ENCODE measurements at regions of chr12 and their contacts with region 1.

Region 1: DNA sequence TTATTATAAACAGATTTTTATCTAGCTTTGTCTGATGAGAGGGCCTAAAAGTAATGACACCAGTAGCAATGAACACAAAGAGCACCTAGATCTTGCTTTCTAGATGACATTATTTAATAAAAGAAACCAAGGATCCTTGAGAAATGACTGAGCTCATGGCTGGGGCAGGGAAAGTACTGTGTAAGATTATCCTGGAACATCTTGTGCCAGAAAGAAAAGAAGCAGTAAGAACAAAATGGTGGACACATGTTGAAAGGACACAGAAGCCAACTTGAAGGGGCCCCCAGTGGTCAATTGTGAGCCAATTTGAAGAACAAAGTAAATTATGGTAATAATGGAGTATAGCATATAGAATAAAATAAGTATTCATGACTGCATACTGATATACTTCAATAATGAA is 10.0 kb downstream of the IFNG-AS1 start:
- DNase-seq: no peak
- ATAC-seq: no peak
- H3K4me3 ChIP-seq: no peak overlapping the region
- H3K27ac ChIP-seq: no peak overlapping the region
- H3K4me1 ChIP-seq: no peaks in the 10 kb centered on the region
- H3K27me3 ChIP-seq: no peaks in the 10 kb centered on the region
- CTCF ChIP-seq: no peak

Region 2: DNA sequence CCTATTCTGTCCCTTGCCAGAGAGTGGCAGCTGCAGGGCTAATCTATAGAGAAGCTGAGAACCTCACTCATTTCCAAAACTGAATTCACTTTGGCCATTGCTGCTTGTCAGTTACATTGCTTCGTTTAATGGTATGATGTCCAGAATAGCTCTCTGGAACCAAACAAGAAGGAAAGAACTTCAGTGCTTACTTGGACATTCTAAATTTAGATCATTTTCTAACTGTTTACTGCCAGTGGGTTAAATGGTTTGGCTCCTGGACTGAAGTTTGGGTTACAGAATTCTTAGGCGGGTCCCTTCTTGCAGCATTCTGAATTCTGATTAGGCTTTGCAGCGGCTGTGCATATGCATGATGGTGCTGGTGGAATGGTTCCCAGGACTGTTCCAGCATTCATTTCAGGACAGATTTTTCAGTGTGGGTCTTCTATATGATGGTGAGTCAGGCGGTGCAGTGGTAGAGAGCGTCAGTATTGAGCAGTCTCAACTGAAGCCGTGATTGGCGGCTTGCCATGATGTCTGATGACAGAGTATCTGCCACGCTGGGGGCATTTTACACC is 202.0 kb before region 1 on chr12:
- CTCF ChIA-PET with region 1: no interaction called
- POLR2A ChIA-PET with region 1: no interaction called
- intact Hi-C with region 1: no loop called
- DNase-seq: no peak
- ATAC-seq: no peak
- H3K4me3 ChIP-seq: no peak overlapping the region
- H3K27ac ChIP-seq: no peak overlapping the region
- H3K4me1 ChIP-seq: peaks cover 12% of the 10 kb centered on the region
- H3K27me3 ChIP-seq: no peaks in the 10 kb centered on the region
- CTCF ChIP-seq: no peak

Region 3: GRCh38 chr12:68031881-68032739 is 32.9 kb after region 1 on chr12:
- CTCF ChIA-PET with region 1: interaction called, 10 read pairs
- POLR2A ChIA-PET with region 1: no interaction called
- intact Hi-C with region 1: no loop called
- DNase-seq: no peak
- ATAC-seq: no peak
- H3K4me3 ChIP-seq: no peak overlapping the region
- H3K27ac ChIP-seq: no peak overlapping the region
- H3K4me1 ChIP-seq: no peaks in the 10 kb centered on the region
- H3K27me3 ChIP-seq: peaks cover 7% of the 10 kb centered on the region; the same call in 1 of the 2 replicates
- CTCF ChIP-seq: no peak